H1 (cell line): ENCODE measurements at regions of chr15 and their contacts with region 1.

Region 1: GRCh38 chr15:74202452-74203428 is at the start of gene STRA6:
- DNase-seq: peak; percentile 90 to 93
- H3K4me3 ChIP-seq: peak within 1 kb of the TSS; percentile 26 to 60 (median 56); a peak in 7 of 8 replicates
- H3K27ac ChIP-seq: peak within 1 kb of the TSS; percentile 46; the same call in 1 of the 2 replicates
- H3K4me1 ChIP-seq: peaks cover 0 to 49% (median 33%) of the 10 kb centered on the region in 4 experiments; a peak in 6 of 7 replicates
- H3K27me3 ChIP-seq: peaks cover 0 to 7% (median 4%) of the 10 kb centered on the region in 4 experiments; a peak in 2 of 7 replicates
- CTCF ChIP-seq: peak; percentile 56 to 68 (median 60)
- EP300 ChIP-seq: peak in 1 of 2 experiments; percentile 89; a peak in 1 of 3 replicates
- POLR2A ChIP-seq: peak in 1 of 2 experiments; percentile 34; a peak in 2 of 3 replicates
- RAD21 ChIP-seq: peak; percentile 55 to 77
- total RNA-seq, gene STRA6: 7.6 and 9.3 TPM in 2 replicates

Region 2: GRCh38 chr15:74127260-74127953 is 75.3 kb before region 1 on chr15:
- CTCF ChIA-PET with region 1: interaction called, 22 read pairs
- POLR2A ChIA-PET with region 1: interaction called, 7 read pairs
- DNase-seq: peak; percentile 78 to 100
- H3K4me3 ChIP-seq: peak overlapping the region in 3 of 4 experiments; percentile 26 to 57 (median 36); a peak in 7 of 8 replicates
- H3K27ac ChIP-seq: no peak overlapping the region
- H3K4me1 ChIP-seq: peaks cover 2 to 55% (median 42%) of the 10 kb centered on the region in 4 experiments
- H3K27me3 ChIP-seq: peaks cover 49 to 64% (median 57%) of the 10 kb centered on the region in 4 experiments
- CTCF ChIP-seq: peak in 2 of 3 experiments; percentile 99; a peak in 3 of 4 replicates
- EP300 ChIP-seq: no peak
- POLR2A ChIP-seq: no peak
- RAD21 ChIP-seq: peak; percentile 96 to 99

Region 3: GRCh38 chr15:74222240-74223119 is 19.7 kb after region 1 on chr15:
- CTCF ChIA-PET with region 1: interaction called, 8 read pairs
- POLR2A ChIA-PET with region 1: interaction called, 58 read pairs
- DNase-seq: no peak
- H3K4me3 ChIP-seq: peak overlapping the region in 1 of 4 experiments; percentile 36; a peak in 1 of 8 replicates
- H3K27ac ChIP-seq: no peak overlapping the region
- H3K4me1 ChIP-seq: peaks cover 3 to 45% (median 30%) of the 10 kb centered on the region in 4 experiments
- H3K27me3 ChIP-seq: peaks cover 25 to 92% (median 86%) of the 10 kb centered on the region in 4 experiments
- CTCF ChIP-seq: no peak
- EP300 ChIP-seq: no peak
- POLR2A ChIP-seq: no peak
- RAD21 ChIP-seq: no peak

Region 4: GRCh38 chr15:74265046-74265639 is 62.4 kb after region 1 on chr15:
- CTCF ChIA-PET with region 1: interaction called, 10 read pairs
- POLR2A ChIA-PET with region 1: interaction called, 3 read pairs
- DNase-seq: peak; percentile 27 to 87
- H3K4me3 ChIP-seq: no peak overlapping the region
- H3K27ac ChIP-seq: no peak overlapping the region
- H3K4me1 ChIP-seq: peaks cover 7 to 15% (median 9%) of the 10 kb centered on the region in 4 experiments
- H3K27me3 ChIP-seq: peaks cover 0 to 8% (median 0%) of the 10 kb centered on the region in 4 experiments; a peak in 1 of 7 replicates
- CTCF ChIP-seq: no peak
- EP300 ChIP-seq: no peak
- POLR2A ChIP-seq: no peak
- RAD21 ChIP-seq: peak in 1 of 2 experiments; percentile 9; a peak in 1 of 4 replicates

Region 5: DNA sequence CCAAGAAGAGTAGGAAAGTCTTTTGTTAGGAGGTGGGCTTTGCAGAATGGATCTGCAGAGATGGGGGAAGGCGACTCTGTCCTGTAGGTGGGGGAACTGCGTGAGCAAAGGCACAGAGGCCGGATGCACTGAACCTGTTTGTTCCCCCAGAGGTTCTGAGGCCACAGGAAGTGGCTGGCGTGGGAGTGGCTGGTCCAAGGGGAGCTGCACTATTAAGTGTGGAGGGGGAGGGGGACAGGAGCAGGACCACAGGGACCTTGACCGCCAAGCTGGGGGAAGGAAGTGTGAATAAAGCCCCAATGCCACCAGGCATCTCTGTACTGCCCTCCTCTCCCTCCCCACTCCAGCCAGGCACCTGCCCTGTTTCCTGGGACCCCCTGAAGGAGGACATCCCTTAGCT is 112.9 kb after region 1 on chr15:
- CTCF ChIA-PET with region 1: interaction called, 38 read pairs
- POLR2A ChIA-PET with region 1: interaction called, 4 read pairs
- DNase-seq: no peak
- H3K4me3 ChIP-seq: no peak overlapping the region
- H3K27ac ChIP-seq: no peak overlapping the region
- H3K4me1 ChIP-seq: peaks cover 3 to 45% (median 31%) of the 10 kb centered on the region in 4 experiments
- H3K27me3 ChIP-seq: peaks cover 0 to 3% (median under 1%) of the 10 kb centered on the region in 4 experiments; a peak in 2 of 7 replicates
- CTCF ChIP-seq: no peak
- EP300 ChIP-seq: no peak
- POLR2A ChIP-seq: no peak
- RAD21 ChIP-seq: no peak